Calu3 (cell line): ENCODE measurements at regions of chr12 and their contacts with region 1.

Region 1: DNA sequence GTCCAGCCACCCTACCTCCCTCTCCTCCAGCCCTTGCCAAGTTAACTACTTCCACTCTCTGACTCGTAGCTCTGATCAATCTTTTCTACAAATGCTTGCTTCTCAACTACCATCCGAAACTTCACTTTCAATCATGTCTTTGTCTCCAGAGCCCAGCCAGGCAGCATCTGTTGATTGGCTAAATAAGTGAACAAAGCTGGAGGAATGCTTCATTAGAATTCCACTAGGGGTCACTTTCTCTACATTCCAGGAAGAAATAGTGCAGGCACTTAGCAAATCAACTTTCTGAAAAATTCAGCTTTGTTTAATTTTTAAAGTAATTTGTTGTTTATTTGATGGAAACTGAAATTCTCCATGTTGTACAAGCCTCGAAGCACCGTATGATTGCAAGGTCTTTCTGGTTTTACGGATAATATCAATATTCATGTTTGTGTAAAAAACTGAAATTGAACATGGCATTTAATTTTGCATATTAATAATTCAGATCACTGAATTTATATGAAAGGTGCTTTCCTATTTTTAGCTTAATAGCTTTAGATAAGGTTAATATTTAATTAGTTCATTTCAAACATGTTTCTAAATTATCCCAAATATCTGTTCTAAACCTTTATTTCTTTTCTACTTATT is 32.4 kb upstream of the HELB start:
- DNase-seq: peak; percentile 25
- H3K4me3 Mint-ChIP-seq: no peak overlapping the region
- H3K27ac Mint-ChIP-seq: no peak overlapping the region
- H3K4me1 Mint-ChIP-seq: no peaks in the 10 kb centered on the region
- H3K27me3 Mint-ChIP-seq: no peaks in the 10 kb centered on the region
- CTCF ChIP-seq: peak; percentile 59

Region 2: GRCh38 chr12:66301944-66302826 is 32.3 kb after region 1 on chr12 and contains the start of gene HELB:
- CTCF ChIA-PET with region 1: no interaction called
- intact Hi-C with region 1: no loop called
- DNase-seq: peak; percentile 98
- H3K4me3 Mint-ChIP-seq: peak within 1 kb of the TSS; percentile 89
- H3K27ac Mint-ChIP-seq: peak within 1 kb of the TSS; percentile 73
- H3K4me1 Mint-ChIP-seq: peaks cover 27% of the 10 kb centered on the region
- H3K27me3 Mint-ChIP-seq: peaks cover 24% of the 10 kb centered on the region
- CTCF ChIP-seq: no peak
- total RNA-seq, gene HELB: 9.4 and 9.6 TPM in 2 replicates

Region 3: DNA sequence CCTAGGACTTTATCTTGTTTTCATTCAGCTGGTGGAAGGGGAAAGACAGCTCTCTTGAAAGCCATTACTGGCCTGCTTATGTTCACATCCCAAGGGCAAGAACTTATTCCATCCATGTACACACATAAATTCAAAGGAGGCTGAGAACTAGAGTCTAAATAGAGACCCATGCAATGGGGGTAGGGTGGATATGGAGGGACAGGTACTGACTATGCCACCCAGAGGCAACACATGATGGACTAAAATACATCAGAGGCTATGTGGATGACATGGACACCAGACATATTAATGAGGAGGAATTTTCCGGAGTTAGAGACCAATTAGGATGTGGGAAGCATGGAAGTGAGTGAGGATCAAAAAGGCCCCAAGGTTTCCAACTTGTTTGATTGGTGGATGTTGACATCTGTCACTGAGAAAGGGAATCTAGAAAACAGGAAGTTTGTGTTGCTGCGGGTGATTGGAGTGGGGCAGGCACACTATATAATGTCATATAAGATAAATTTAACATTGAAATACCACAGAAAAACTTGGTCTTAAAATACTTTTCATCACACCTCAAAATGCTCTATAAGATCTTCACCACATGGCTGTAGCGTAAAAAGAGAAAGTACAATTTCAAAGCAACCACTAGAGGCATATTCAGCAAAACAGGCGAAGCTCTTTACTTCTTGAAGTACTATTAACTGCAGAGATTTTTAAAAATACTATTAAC is 278.6 kb after region 1 on chr12:
- CTCF ChIA-PET with region 1: no interaction called
- intact Hi-C with region 1: loop called (anchors 10 kb)
- DNase-seq: no peak
- H3K4me3 Mint-ChIP-seq: no peak overlapping the region
- H3K27ac Mint-ChIP-seq: no peak overlapping the region
- H3K4me1 Mint-ChIP-seq: no peaks in the 10 kb centered on the region
- H3K27me3 Mint-ChIP-seq: no peaks in the 10 kb centered on the region
- CTCF ChIP-seq: no peak